Activated CD4-positive, alpha-beta memory T cell treated with anti-CD3 and anti-CD28 coated beads for 36 hours (primary cell): ENCODE measurements at regions of chr1 and their contacts with region 1.

Region 1: GRCh38 chr1:185595835-185596667 is 138.1 kb upstream of the HMCN1 start:
- DNase-seq: peak; percentile 55
- H3K4me3 Mint-ChIP-seq: no peak overlapping the region
- H3K27ac Mint-ChIP-seq: no peak overlapping the region
- H3K4me1 Mint-ChIP-seq: peaks cover 23% of the 10 kb centered on the region
- H3K27me3 Mint-ChIP-seq: no peaks in the 10 kb centered on the region

Region 2: GRCh38 chr1:184945029-184945428 is 651.0 kb before region 1 on chr1:
- CTCF ChIA-PET with region 1: no interaction called
- POLR2A ChIA-PET with region 1: no interaction called
- intact Hi-C with region 1: no loop called
- DNase-seq: no peak
- H3K4me3 Mint-ChIP-seq: no peak overlapping the region
- H3K27ac Mint-ChIP-seq: no peak overlapping the region
- H3K4me1 Mint-ChIP-seq: peaks cover 32% of the 10 kb centered on the region
- H3K27me3 Mint-ChIP-seq: no peaks in the 10 kb centered on the region

Region 3: DNA sequence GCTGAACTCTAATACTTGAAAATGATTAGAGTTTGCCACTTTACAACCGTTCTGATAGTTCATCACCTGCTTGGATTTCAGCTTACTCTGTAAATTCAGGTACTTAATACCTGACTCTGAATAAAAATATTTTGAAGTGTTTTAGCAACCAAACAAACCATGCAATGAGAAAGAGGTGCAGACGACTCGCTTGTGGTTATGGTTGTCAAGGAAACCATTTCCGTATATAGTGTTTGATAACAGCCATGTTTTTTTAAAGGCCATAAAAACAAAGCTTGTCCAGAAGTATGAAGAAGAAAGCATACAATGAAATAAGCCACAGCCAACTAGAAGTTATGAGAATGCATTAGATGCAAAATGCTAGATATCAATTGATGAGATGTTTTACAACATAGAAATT is 29.1 kb before region 1 on chr1:
- CTCF ChIA-PET with region 1: interaction called, 12 read pairs
- POLR2A ChIA-PET with region 1: no interaction called
- intact Hi-C with region 1: loop called (anchors 1 kb)
- DNase-seq: peak; percentile 57
- H3K4me3 Mint-ChIP-seq: no peak overlapping the region
- H3K27ac Mint-ChIP-seq: peak overlapping the region; percentile 74
- H3K4me1 Mint-ChIP-seq: peaks cover 62% of the 10 kb centered on the region
- H3K27me3 Mint-ChIP-seq: no peaks in the 10 kb centered on the region

Region 4: GRCh38 chr1:185581961-185582725 is 13.9 kb before region 1 on chr1:
- CTCF ChIA-PET with region 1: interaction called, 15 read pairs
- POLR2A ChIA-PET with region 1: no interaction called
- intact Hi-C with region 1: no loop called
- DNase-seq: no peak
- H3K4me3 Mint-ChIP-seq: no peak overlapping the region
- H3K27ac Mint-ChIP-seq: no peak overlapping the region
- H3K4me1 Mint-ChIP-seq: no peaks in the 10 kb centered on the region
- H3K27me3 Mint-ChIP-seq: no peaks in the 10 kb centered on the region

Region 5: DNA sequence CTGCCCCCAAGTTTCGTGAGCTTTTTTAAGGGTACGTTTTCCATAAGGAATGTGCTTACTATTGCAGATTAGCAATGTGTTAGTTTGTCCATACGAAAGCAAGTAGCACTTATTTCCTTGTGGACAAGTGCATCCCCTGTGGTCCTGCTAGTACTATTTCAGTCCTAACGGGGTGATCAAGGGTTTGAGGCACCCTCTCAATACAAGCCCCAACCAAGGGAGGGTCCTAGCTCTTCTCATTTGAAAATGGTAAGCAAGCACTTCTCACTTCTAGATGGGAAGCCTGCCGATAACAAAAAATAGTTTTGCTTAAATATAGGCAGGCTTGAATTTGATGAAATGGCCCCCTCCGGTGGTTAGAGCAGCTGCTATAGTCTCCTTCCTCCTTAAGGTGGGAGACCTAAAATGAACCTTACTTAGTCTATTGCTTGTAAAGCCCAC is 74.2 kb after region 1 on chr1:
- CTCF ChIA-PET with region 1: interaction called, 24 read pairs
- POLR2A ChIA-PET with region 1: no interaction called
- intact Hi-C with region 1: no loop called
- DNase-seq: peak; percentile 57
- H3K4me3 Mint-ChIP-seq: no peak overlapping the region
- H3K27ac Mint-ChIP-seq: no peak overlapping the region
- H3K4me1 Mint-ChIP-seq: peaks cover 15% of the 10 kb centered on the region
- H3K27me3 Mint-ChIP-seq: no peaks in the 10 kb centered on the region